ENCODE measurements at regions of chr15 and their contacts with region 1.

Region 1: DNA sequence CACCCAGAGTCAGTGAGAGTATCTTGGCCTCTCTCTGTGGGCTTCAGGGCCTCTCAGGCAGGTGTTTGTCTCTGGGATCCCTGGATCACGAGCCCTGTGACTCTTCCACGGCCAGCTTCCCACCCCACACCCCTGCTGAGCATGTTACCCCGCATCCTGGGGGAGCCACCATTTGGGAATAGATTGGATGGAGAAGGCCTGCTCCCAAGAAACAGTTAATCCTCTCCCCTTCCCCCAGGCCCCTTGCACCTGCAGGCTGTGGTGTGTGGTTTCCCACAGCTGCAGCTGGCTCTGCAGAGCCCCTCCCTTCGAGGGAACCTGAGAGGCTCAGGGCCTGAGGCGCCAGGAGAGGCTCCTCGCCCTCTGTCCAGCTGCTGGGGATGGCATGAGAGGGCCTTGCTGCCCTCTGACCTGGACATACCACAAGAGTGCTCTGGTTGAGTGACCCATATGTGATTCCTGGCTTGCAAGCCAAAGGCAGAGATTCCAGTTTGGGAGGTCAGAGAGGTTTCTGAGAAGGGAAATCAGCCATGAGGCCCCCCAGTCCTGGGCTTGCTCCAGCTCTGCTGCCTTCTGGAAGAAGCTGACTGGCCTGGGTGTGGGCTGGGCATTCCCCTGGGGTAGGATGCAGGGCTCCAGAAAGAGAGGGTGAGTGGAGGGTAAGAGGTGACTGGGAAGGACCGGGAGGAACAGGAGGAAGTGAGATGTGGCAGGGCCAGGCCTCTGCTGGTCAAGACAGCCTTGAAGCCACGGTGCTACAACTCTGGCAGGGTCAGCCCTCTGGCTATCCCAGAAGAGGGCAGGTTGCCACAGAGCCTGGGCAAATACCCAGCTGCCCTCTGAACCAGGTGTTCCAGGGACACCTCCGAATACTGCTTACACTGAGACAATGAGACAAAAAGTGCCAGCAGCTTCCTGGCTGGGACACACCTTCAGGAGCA is 15.9 kb upstream of the SRP14 start:
- DNase-seq: peak; percentile 46

Region 2: GRCh38 chr15:40108855-40109735 is 54.2 kb after region 1 on chr15 and contains the start of gene BMF:
- in situ Hi-C with region 1: loop called (anchors 10 kb)
- DNase-seq: peak; percentile 99

Measured in KBM-7 (cell line).